Activated T-helper 1 cell treated with anti-CD3 and anti-CD28 coated beads, Interleukin-12 subunit alpha, Interleukin-12 subunit beta, Interleukin-2, Interleukin-4 antibody, amounts not matched to agents 30 ng/mL and 10 ng/mL and 1 ng/mL, durations not matched to agents 14 hours and 24 hours and 36 hours (primary cell): ENCODE measurements at regions of chr17 and their contacts with region 1.

Region 1: DNA sequence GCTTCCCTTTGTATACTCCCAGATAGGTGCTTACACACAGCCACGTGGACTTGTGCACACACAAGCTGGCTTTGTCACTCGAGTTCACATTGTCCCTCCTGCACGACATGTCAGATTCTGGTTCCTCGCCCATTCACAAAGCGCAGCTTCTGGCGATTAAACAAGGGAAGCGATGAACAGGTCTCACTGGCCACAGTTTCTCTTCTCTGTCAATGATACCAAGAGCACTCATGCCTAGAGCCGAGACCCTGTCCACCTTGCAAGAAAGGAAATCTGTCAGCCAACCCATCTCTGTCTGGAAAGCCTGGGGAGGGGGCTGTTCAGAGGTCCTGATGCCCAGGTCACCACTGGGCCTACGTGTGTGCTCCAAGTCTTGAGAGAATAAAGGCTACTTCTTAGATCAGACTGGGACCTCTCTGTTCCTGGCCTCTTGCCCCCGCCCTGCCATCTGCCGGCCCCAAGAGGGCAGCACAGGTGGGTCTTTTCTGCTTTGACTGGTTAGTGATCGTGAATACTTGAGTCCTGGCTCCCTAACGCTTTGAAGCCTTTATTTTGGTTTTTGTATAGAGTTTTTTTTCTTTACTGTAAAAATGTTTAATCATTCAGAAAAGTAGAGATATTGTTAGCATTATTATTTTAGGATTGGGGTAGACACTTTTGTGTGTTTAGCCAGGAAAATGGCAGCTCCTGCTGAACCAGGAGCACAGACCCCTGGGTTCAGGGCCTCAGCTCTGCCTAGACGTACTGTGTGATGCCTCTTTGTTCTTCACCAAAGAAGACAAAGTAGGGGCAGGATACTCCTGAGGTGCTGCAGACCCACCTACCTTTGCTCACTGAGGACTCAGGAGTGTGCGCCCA is 104.7 kb downstream of the MRM1 start:
- DNase-seq: peak; percentile 16
- H3K4me3 Mint-ChIP-seq: no peak overlapping the region
- H3K27ac Mint-ChIP-seq: no peak overlapping the region
- H3K4me1 Mint-ChIP-seq: no peaks in the 10 kb centered on the region
- H3K27me3 Mint-ChIP-seq: peaks cover 40% of the 10 kb centered on the region

Region 2: GRCh38 chr17:36545465-36546417 is 160.4 kb before region 1 on chr17:
- intact Hi-C with region 1: no loop called
- DNase-seq: peak; percentile 95
- H3K4me3 Mint-ChIP-seq: peak overlapping the region; percentile 87
- H3K27ac Mint-ChIP-seq: peak overlapping the region; percentile 92
- H3K4me1 Mint-ChIP-seq: peaks cover 36% of the 10 kb centered on the region
- H3K27me3 Mint-ChIP-seq: no peaks in the 10 kb centered on the region

Region 3: DNA sequence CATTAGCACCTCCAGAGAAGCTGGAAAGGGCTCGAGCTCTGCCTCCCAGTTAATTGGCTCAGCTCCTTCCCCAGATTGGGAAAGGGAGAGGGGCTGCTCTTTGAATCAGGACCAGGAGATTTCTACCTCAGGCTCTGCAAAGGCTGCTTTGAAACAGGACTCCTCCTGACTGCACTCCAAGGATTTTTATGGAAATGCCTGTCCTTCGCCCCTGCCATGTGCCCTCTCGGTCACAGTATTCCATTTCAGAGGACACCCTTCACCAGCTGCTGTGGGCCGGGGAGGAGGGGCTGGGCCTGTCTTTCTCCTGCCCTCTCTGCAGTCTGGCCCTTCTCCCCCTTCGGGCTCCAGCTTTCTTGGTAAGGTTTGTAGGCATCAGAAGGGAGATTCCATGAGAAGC is 91.2 kb before region 1 on chr17:
- intact Hi-C with region 1: no loop called
- DNase-seq: no peak
- H3K4me3 Mint-ChIP-seq: no peak overlapping the region
- H3K27ac Mint-ChIP-seq: no peak overlapping the region
- H3K4me1 Mint-ChIP-seq: no peaks in the 10 kb centered on the region
- H3K27me3 Mint-ChIP-seq: no peaks in the 10 kb centered on the region

Region 4: DNA sequence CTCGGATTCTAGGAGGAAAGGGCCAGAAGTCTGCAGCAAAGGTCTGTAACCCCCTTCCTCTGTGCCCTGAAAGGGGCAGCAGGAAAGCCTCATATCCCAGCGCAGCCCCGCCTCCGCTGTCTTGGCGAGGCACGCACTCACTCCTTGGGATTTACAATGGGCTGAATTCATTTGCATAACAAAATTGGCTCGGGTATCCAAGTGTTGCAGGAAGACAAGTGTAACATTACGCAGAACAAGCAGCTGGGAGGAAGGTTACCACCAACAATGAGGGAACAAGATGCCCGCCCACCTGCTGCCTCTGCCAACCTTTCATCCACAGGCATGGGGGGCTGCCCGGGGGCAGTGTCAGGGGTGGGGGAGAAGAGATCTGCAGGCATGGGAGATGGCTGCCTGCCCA is 25.7 kb after region 1 on chr17:
- intact Hi-C with region 1: no loop called
- DNase-seq: no peak
- H3K4me3 Mint-ChIP-seq: no peak overlapping the region
- H3K27ac Mint-ChIP-seq: no peak overlapping the region
- H3K4me1 Mint-ChIP-seq: peaks cover 26% of the 10 kb centered on the region
- H3K27me3 Mint-ChIP-seq: peaks cover 13% of the 10 kb centered on the region

Region 5: DNA sequence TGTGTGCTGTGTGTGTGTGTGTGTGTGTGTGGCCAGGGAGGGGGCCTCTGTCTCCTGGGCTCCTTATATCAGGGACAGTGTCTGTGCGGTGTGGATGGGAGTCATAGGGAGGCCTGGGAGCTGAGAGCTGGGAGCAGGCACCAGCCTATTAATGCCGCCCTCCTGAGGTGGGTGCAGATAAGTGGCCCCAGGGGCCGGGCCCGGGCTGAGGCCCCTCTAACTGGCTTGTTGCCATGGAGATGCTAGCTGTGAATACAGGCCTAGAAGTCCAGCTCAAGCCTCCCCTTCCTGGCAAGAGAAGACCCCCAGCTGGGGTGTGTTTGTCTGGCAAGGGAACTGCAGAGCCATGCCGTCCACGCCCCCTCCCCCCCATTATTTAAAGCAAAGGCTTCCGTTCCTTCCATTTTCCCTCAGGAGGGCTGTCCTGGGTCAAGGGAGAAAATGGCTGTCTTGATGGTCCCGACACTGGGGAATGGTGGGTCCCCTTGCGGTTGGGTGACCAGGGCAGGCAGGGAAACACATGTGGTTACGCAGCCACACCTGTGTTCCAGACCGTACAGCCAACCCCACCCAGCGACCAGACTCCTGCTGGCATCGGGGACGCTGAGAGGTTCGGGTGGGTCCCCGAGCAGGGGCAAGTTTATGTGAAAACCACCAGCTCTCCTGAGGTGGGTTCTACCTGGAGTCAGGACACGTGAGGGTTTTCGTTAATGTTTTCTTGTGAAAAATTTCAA is 36.3 kb after region 1 on chr17:
- intact Hi-C with region 1: no loop called
- DNase-seq: no peak
- H3K4me3 Mint-ChIP-seq: no peak overlapping the region
- H3K27ac Mint-ChIP-seq: no peak overlapping the region
- H3K4me1 Mint-ChIP-seq: no peaks in the 10 kb centered on the region
- H3K27me3 Mint-ChIP-seq: peaks cover 10% of the 10 kb centered on the region

Region 6: DNA sequence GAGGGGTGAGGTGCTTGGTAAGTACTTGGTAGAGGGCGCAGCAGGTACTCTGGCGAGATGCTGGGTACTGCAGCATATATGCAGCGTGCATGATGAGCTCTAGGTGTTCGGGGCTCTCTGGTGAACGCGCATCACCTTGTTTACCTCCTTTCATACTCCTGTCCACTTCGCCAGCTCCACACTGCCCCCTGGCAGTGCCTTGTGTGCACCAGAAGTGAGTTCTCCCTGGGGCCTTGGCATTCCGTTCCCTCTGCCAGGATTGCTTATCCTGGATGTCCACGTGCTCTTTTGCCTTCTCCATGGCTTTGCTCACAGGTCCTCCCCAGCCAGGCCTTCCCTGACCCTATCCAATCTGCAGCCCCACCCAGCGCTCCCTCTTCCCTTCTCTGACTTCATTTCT is 49.5 kb after region 1 on chr17:
- intact Hi-C with region 1: loop called (anchors 1 kb)
- DNase-seq: peak; percentile 10
- H3K4me3 Mint-ChIP-seq: no peak overlapping the region
- H3K27ac Mint-ChIP-seq: no peak overlapping the region
- H3K4me1 Mint-ChIP-seq: no peaks in the 10 kb centered on the region
- H3K27me3 Mint-ChIP-seq: peaks cover 4% of the 10 kb centered on the region